Astrocyte of the spinal cord (primary cell): ENCODE measurements at regions of chr12 and their contacts with region 1.

Region 1: DNA sequence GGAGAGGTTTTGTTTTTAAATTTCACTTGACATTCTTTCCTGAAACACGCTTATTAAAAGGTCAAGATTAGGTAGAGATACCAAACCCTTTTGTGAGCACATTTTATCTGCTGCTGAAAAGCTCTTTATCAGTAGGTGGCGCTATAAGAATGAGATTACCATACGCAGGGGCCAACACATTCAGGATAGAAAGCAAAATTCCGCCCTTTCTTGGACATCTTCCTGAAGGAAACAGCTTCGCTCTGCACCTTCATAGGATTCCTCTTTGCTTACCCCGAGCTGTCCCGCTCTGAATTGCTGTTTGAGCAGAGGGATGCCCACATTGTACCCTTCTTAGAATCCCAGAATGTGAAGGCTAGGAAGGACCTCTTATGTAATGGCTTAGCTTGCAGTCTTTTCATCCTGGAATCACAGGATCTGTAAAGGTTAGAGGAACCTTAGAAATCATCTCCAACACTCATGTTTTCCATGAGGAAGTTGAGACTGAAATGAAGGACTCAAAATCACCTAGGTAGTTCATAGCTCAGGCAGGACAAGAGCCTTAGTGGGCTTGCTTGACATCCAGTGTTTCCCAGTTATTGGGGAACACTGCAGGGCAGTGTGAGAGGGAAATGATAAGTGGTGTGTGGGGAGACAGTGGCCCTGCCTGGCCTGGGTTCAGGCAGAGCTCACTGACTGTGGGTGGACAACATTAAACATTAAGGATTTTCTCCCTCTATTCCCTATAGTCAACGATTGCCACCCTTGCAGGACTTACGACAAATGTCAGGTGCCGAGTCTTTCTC is 38.7 kb upstream of the CRY1 start:
- DNase-seq: peak; percentile 71
- H3K4me3 ChIP-seq: no peak overlapping the region
- CTCF ChIP-seq: peak; percentile 75

Region 2: GRCh38 chr12:107328442-107329133 is 196.6 kb after region 1 on chr12:
- in situ Hi-C with region 1: no loop called
- DNase-seq: peak; percentile 73
- H3K4me3 ChIP-seq: no peak overlapping the region
- CTCF ChIP-seq: no peak

Region 3: DNA sequence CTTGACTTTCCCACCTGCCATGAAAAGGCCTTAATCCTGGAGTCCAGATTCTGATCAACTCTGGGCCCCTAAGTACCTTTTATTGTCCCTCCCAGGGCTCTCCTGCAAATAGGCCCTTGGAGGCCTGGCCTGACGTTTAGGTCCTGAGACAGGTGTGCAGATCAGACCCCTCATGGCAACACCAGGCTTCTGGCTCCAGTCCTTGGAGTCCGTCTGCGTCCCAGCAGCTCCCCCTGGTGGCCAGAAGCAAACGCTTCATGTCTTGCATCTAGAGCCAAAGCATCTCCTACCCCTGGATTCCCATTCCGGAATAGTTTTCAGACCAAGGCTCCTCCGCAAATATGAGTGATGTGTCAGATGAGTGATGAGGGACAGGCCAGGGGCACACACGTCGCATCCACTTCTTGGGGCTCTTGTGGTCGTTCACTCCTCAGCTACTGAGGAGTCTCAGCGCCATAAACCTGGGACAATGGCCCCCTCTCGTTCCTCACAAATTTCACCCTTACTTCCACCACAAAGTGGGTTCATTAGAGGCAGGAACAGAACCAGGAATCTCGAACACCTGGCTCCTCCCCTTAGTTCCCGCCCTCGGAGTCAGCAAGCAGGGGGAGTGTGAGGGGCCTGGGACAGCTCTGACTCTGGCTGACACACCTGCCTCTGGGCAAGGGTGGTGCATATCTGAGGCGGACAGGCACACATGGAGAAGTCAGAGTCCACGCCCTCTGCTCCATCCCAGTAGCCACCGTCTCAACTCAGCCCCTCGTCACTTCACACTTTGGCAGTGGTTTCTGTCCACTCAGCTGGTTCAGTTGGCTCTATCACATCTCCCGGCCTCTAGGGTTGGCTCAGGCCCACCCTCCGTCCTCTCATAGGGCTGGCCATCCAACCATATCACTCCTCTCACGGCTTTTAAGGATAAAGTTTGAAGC is 475.7 kb after region 1 on chr12:
- in situ Hi-C with region 1: loop called (anchors 25 kb)
- DNase-seq: peak; percentile 73
- H3K4me3 ChIP-seq: no peak overlapping the region
- CTCF ChIP-seq: peak; percentile 91